Left cardiac atrium (tissue), 4 donors: ENCODE measurements at regions of chr16 and their contacts with region 1.

Region 1: DNA sequence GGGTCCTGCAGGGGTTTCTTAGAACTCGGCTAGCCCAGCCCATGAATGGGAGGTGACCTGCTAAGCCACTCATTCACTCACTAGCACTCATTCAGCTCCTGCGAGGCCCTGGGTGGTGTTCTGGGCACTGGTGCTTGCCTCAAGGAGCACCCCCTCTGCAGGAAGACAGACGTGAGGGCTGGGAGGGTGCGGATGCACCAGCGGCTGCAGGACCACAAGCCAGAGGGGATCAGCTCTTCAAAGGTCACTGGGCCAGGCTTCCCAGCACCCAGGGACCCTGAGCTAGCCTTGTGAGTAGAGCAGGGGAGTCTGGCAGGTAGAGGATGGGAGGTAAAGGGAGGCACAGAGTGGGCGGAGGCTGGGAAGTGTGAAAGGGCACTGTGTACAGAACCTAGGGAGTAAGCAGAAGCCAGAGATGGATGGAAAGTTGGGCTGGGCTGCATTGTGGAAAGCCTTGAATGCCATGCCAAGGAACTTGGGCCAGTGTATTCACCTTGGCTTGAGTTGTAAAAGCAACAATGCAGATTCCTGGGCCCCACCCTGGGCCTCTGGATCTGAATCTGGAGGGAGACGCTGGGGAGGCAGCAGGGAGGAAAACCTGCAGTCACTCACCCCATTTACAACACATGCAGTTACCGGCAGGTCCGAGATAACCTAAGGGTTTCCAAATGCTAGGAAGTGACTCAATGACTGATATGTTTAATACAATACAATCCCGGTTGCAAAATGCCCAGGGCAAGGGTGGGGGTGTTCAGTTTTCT is 1.7 kb downstream of the IL4R start:
- DNase-seq: peak; percentile 91
- ATAC-seq: peak in 1 of 2 donors; percentile 56

Region 2: GRCh38 chr16:27235055-27235937 is 80.2 kb before region 1 on chr16:
- intact Hi-C with region 1: loop called in 1 of 2 experiments (anchors 5 kb)
- DNase-seq: peak; percentile 94
- ATAC-seq: peak; percentile 66 to 68